Transverse colon (tissue), 4 donors: ENCODE measurements at regions of chr3 and their contacts with region 1.

Region 1: DNA sequence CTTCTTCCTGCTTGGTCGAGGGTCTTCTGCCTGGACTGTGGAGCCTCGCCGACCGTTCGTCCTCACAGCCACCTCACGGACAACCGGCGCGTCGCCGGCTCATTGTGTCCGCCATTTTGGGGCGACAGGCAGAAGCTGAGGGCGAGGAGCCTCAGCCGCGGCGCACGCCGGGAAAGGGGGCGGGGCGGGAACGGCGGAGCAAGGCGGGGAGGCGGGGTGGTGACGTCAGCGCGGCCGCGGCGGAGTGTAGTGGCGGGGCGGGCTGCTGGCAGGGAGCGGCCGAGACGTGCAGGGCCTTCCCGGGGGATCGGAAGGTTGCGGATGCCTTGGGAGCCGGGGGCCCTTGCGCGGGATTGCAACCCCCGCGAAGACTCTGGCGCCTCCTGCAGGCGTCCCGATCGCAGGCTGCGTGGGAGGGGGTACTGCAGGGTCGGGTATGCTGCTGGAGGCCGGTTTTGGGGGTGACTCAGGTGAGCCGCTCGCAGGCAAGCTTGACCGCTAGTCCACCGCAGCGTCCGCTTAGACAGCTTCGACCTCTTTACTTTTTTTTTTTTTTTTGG is at the start of gene WDR82:
- DNase-seq: peak; percentile 99
- H3K4me3 ChIP-seq: peak within 1 kb of the TSS; percentile 77 to 97 (median 84)
- H3K27ac ChIP-seq: peak within 1 kb of the TSS; percentile 97 to 99 (median 98)
- H3K4me1 ChIP-seq: peaks cover 24 to 75% (median 39%) of the 10 kb centered on the region in 4 donors
- H3K27me3 ChIP-seq: no peaks in the 10 kb centered on the region
- CTCF ChIP-seq: peak; percentile 39 to 54 (median 44)
- EP300 ChIP-seq: no peak
- POLR2A ChIP-seq: peak; percentile 91
- total RNA-seq, gene WDR82: 14.6 to 44.9 (median 40.8) TPM

Region 2: DNA sequence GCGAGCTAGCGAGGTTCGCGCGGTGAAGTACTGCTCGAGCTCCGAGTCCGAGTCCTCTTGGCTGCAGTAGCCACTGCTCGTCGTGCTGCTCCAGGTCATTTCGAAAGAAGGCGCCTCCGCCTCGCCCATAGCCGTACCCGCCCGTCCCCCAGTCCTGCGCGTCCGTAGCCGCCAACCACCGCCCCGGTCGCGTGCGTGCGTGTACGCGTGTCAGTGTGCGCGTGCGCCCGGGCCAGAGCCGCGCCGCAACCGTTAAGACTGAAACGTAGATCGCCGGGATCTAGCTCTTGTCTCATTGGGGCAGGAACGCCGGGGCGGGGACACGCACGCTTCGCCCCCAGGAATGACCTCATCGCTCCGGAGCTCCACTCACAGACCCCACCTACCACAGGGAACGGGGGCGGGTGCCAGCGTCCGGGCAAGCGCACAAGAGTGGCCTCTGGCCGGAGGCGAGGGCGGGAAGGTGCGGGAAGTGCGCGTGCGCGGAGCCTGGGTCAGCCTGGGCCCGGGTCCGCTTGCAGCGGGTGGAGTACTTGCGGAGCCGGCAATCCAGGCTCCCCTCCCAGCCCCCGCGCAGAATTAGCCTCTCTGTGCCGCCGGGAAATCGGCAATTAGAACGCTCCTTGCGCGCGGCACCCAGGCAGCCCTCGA is 1941.3 kb before region 1 on chr3:
- in situ Hi-C with region 1: no loop called
- intact Hi-C with region 1: loop called (anchors 10 kb)
- DNase-seq: peak; percentile 100
- H3K4me3 ChIP-seq: peak overlapping the region; percentile 49 to 91 (median 60)
- H3K27ac ChIP-seq: peak overlapping the region; percentile 93 to 99 (median 98)
- H3K4me1 ChIP-seq: peaks cover 26 to 74% (median 59%) of the 10 kb centered on the region in 4 donors
- H3K27me3 ChIP-seq: no peaks in the 10 kb centered on the region
- CTCF ChIP-seq: no peak
- EP300 ChIP-seq: peak; percentile 1
- POLR2A ChIP-seq: peak; percentile 92

Region 3: GRCh38 chr3:52238761-52239701 is 39.6 kb before region 1 on chr3 and contains the start of gene TWF2:
- in situ Hi-C with region 1: loop called in 1 of 4 experiments (anchors 10 kb)
- intact Hi-C with region 1: loop called (anchors 2 kb)
- DNase-seq: peak; percentile 85
- H3K4me3 ChIP-seq: peak within 1 kb of the TSS; percentile 69 to 82 (median 76)
- H3K27ac ChIP-seq: peak within 1 kb of the TSS; percentile 86 to 96 (median 94)
- H3K4me1 ChIP-seq: peaks cover 24 to 42% (median 31%) of the 10 kb centered on the region in 4 donors
- H3K27me3 ChIP-seq: no peaks in the 10 kb centered on the region
- CTCF ChIP-seq: peak; percentile 33 to 71 (median 47)
- EP300 ChIP-seq: no peak
- POLR2A ChIP-seq: peak; percentile 56
- total RNA-seq, gene TWF2: 29.9 to 82.7 (median 61.0) TPM

Region 4: GRCh38 chr3:52339612-52340011 is 61.0 kb after region 1 on chr3:
- in situ Hi-C with region 1: no loop called
- intact Hi-C with region 1: no loop called
- DNase-seq: peak; percentile 33
- H3K4me3 ChIP-seq: no peak overlapping the region
- H3K27ac ChIP-seq: no peak overlapping the region
- H3K4me1 ChIP-seq: no peaks in the 10 kb centered on the region
- H3K27me3 ChIP-seq: no peaks in the 10 kb centered on the region
- CTCF ChIP-seq: peak; percentile 62 to 85 (median 66)
- EP300 ChIP-seq: no peak
- POLR2A ChIP-seq: no peak